B cell (primary cell): ENCODE measurements at regions of chr7 and their contacts with region 1.

Region 1: DNA sequence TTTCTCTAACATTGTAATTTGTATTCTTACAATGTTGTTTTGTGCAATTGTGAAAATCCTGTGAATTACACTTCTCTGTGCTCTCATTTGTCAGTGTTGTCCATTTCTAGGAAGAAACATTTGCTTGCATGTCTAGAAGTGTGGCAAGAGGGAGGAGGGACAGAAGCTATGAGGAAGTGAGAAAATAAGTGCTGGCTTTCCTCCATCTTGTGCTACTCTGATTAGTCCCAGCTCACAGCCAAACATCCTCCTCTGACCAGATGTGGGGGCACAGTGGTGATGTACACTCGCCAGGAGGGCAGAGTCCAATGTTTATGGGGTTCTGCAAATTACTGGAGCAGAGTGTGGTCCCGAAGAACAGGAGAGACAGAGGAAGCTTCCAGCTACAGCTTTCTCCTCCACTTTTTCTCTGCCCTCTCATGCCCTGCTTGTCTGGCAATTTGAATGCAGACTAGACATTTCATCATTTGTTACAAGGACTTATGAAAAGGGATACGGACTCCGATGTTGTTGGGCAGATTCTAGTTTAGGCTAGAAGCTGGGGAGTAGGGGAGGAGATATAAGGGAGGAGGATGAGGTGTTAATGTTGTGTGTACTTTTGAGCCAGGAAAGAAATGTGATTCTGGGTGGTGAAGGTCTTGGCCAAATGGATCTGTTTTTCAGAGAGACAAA is 131.0 kb upstream of the C1GALT1 start:
- DNase-seq: peak; percentile 46
- ATAC-seq: no peak
- H3K4me3 ChIP-seq: no peak overlapping the region
- H3K4me3 Mint-ChIP-seq: no peak overlapping the region
- H3K27ac ChIP-seq: no peak overlapping the region
- H3K27ac Mint-ChIP-seq: peak overlapping the region; percentile 71
- H3K4me1 ChIP-seq: peaks cover 5 to 8% of the 10 kb centered on the region in 2 donors
- H3K4me1 Mint-ChIP-seq: peaks cover 8% of the 10 kb centered on the region
- H3K27me3 ChIP-seq: no peaks in the 10 kb centered on the region
- H3K27me3 Mint-ChIP-seq: peaks cover 6% of the 10 kb centered on the region
- CTCF ChIP-seq: no peak

Region 2: DNA sequence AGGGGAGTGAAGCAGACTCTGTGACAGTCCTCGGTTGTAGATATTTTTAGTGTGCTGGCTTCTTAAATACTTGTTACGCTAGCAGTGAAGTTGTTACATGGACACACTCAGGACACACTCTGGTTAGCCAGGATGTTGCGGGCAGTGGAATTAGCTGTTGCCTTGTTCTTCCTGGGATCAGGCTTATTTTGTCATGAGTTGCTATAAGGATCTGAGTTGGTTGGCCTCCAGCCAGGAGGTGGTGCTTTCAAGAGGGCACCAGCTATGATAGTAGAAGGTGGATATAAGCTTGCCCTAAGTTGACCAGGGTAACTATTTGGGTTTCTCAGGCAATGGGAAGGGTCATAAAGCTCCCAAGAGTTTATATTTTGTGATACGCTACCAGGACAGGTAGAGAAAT is 19.1 kb before region 1 on chr7:
- CTCF ChIA-PET with region 1: no interaction called
- POLR2A ChIA-PET with region 1: no interaction called
- intact Hi-C with region 1: no loop called
- DNase-seq: no peak
- ATAC-seq: no peak
- H3K4me3 ChIP-seq: no peak overlapping the region
- H3K4me3 Mint-ChIP-seq: no peak overlapping the region
- H3K27ac ChIP-seq: no peak overlapping the region
- H3K27ac Mint-ChIP-seq: no peak overlapping the region
- H3K4me1 ChIP-seq: no peaks in the 10 kb centered on the region
- H3K4me1 Mint-ChIP-seq: no peaks in the 10 kb centered on the region
- H3K27me3 ChIP-seq: peaks cover 0 to 14% (median 11%) of the 10 kb centered on the region in 4 experiments
- H3K27me3 Mint-ChIP-seq: peaks cover 76% of the 10 kb centered on the region
- CTCF ChIP-seq: no peak

Region 3: DNA sequence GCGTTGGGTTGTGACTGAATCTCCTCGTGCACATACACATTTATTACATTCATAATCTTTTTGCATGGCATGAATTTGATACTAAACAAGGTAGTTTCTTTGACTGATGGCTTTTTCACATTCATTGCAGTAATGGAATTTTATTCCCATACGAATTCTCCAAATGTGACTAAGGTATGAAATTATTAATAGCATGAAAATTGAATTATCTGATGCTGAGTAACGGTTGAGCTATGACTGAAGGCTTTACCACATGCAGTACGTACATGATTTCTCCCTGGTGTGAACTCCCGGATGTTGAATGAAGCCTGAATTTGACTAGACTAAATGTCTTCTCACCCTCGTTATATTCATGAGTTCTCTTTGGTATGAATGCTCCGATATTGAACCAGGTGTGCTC is 26.6 kb after region 1 on chr7:
- CTCF ChIA-PET with region 1: no interaction called
- POLR2A ChIA-PET with region 1: no interaction called
- intact Hi-C with region 1: no loop called
- DNase-seq: no peak
- ATAC-seq: no peak
- H3K4me3 ChIP-seq: no peak overlapping the region
- H3K4me3 Mint-ChIP-seq: no peak overlapping the region
- H3K27ac ChIP-seq: no peak overlapping the region
- H3K27ac Mint-ChIP-seq: no peak overlapping the region
- H3K4me1 ChIP-seq: no peaks in the 10 kb centered on the region
- H3K4me1 Mint-ChIP-seq: no peaks in the 10 kb centered on the region
- H3K27me3 ChIP-seq: peaks cover 0 to 4% (median 0%) of the 10 kb centered on the region in 4 experiments
- H3K27me3 Mint-ChIP-seq: peaks cover 11% of the 10 kb centered on the region
- CTCF ChIP-seq: no peak

Region 4: GRCh38 chr7:8295638-8296361 is 1244.5 kb after region 1 on chr7:
- CTCF ChIA-PET with region 1: no interaction called
- POLR2A ChIA-PET with region 1: no interaction called
- intact Hi-C with region 1: loop called (anchors 5 kb)
- DNase-seq: peak; percentile 70
- ATAC-seq: peak; percentile 67
- H3K4me3 ChIP-seq: no peak overlapping the region
- H3K4me3 Mint-ChIP-seq: no peak overlapping the region
- H3K27ac ChIP-seq: no peak overlapping the region
- H3K27ac Mint-ChIP-seq: no peak overlapping the region
- H3K4me1 ChIP-seq: no peaks in the 10 kb centered on the region
- H3K4me1 Mint-ChIP-seq: peaks cover 2% of the 10 kb centered on the region
- H3K27me3 ChIP-seq: peaks cover 0 to 5% (median 0%) of the 10 kb centered on the region in 4 experiments
- H3K27me3 Mint-ChIP-seq: peaks cover 17% of the 10 kb centered on the region
- CTCF ChIP-seq: peak; percentile 84